CD4-positive, alpha-beta T cell (primary cell): ENCODE measurements at regions of chr4 and their contacts with region 1.

Region 1: GRCh38 chr4:52728691-52729240 is 22.5 kb downstream of the ERVMER34-1 start:
- DNase-seq: no peak
- ATAC-seq: no peak
- H3K4me3 ChIP-seq: no peak overlapping the region
- H3K4me3 Mint-ChIP-seq: no peak overlapping the region
- H3K27ac ChIP-seq: no peak overlapping the region
- H3K27ac Mint-ChIP-seq: no peak overlapping the region
- H3K4me1 ChIP-seq: no peaks in the 10 kb centered on the region
- H3K4me1 Mint-ChIP-seq: no peaks in the 10 kb centered on the region
- H3K27me3 ChIP-seq: no peaks in the 10 kb centered on the region
- H3K27me3 Mint-ChIP-seq: no peaks in the 10 kb centered on the region
- CTCF ChIP-seq: no peak

Region 2: DNA sequence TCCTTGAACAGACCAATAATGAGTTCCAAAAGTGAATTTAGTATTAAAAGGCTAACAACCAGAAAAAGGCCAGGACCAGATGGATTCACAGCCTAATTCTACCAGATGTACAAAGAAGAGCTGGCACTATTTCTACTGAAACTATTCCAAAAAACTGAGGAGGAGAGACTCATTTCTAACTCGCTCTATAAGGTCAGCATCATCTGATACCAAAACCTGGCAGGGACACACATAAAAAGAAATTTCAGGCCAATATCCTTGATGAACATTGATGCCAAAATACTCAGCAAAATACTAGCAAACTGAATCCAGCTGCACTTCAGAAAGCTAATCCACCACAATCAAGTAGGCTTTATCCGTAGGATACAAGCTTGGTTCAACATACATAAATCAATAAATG is 33.8 kb before region 1 on chr4:
- CTCF ChIA-PET with region 1: no interaction called
- POLR2A ChIA-PET with region 1: no interaction called
- intact Hi-C with region 1: loop called in 1 of 2 experiments (anchors 5 kb)
- DNase-seq: no peak
- ATAC-seq: no peak
- H3K4me3 ChIP-seq: no peak overlapping the region
- H3K4me3 Mint-ChIP-seq: no peak overlapping the region
- H3K27ac ChIP-seq: no peak overlapping the region
- H3K27ac Mint-ChIP-seq: no peak overlapping the region
- H3K4me1 ChIP-seq: no peaks in the 10 kb centered on the region
- H3K4me1 Mint-ChIP-seq: no peaks in the 10 kb centered on the region
- H3K27me3 ChIP-seq: no peaks in the 10 kb centered on the region
- H3K27me3 Mint-ChIP-seq: peaks cover 20% of the 10 kb centered on the region
- CTCF ChIP-seq: no peak